ENCODE measurements at regions of chr4 and their contacts with region 1.

Region 1: GRCh38 chr4:182806259-182807252 is 110.6 kb downstream of the DCTD start:
- DNase-seq: peak; percentile 84
- ATAC-seq: peak; percentile 42
- H3K4me3 Mint-ChIP-seq: peak overlapping the region; percentile 59
- H3K27ac Mint-ChIP-seq: no peak overlapping the region
- H3K4me1 Mint-ChIP-seq: peaks cover 8% of the 10 kb centered on the region
- H3K27me3 Mint-ChIP-seq: peaks cover 4% of the 10 kb centered on the region

Region 2: DNA sequence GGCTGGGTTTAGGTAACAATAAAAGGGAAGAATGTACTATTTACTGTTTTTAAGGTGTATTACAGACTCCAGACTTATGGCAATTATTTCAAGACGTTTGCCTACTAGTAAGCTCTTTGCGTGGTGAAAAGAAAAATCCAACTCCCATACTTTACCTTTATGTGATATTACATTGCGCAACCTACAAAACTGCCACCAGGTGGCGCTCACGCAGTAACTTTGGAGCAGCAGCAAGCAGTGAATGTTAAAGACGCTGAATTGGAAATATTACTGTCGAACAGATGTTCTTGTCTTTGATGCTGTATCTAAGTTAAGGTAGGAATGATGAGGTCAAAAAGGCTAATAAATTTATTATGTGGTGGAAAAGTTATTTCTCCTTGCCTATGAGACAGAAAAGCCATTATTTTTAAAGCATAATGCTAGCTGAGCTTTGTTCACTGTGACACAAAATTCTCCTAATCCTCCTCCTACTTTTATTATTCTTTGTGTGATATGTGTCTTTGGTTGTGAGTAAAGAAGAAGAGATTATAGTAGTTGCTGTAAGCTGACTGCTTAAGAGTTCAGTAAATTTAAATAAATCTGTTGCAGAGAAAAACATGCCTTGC is 1663.2 kb before region 1 on chr4:
- CTCF ChIA-PET with region 1: no interaction called
- POLR2A ChIA-PET with region 1: no interaction called
- intact Hi-C with region 1: loop called (anchors 1 to 10 kb)
- DNase-seq: peak; percentile 84
- ATAC-seq: peak; percentile 60
- H3K4me3 Mint-ChIP-seq: no peak overlapping the region
- H3K27ac Mint-ChIP-seq: no peak overlapping the region
- H3K4me1 Mint-ChIP-seq: no peaks in the 10 kb centered on the region
- H3K27me3 Mint-ChIP-seq: peaks cover 5% of the 10 kb centered on the region

Region 3: GRCh38 chr4:181569553-181569952 is 1237.0 kb before region 1 on chr4:
- CTCF ChIA-PET with region 1: no interaction called
- POLR2A ChIA-PET with region 1: no interaction called
- intact Hi-C with region 1: loop called in 1 of 2 experiments (anchors 5 kb)
- DNase-seq: no peak
- ATAC-seq: no peak
- H3K4me3 Mint-ChIP-seq: no peak overlapping the region
- H3K27ac Mint-ChIP-seq: no peak overlapping the region
- H3K4me1 Mint-ChIP-seq: no peaks in the 10 kb centered on the region
- H3K27me3 Mint-ChIP-seq: no peaks in the 10 kb centered on the region

Region 4: GRCh38 chr4:182555997-182556418 is 250.5 kb before region 1 on chr4:
- CTCF ChIA-PET with region 1: no interaction called
- POLR2A ChIA-PET with region 1: no interaction called
- intact Hi-C with region 1: no loop called
- DNase-seq: no peak
- ATAC-seq: no peak
- H3K4me3 Mint-ChIP-seq: no peak overlapping the region
- H3K27ac Mint-ChIP-seq: no peak overlapping the region
- H3K4me1 Mint-ChIP-seq: no peaks in the 10 kb centered on the region
- H3K27me3 Mint-ChIP-seq: peaks cover 16% of the 10 kb centered on the region

Region 5: GRCh38 chr4:182585321-182585720 is 221.2 kb before region 1 on chr4:
- CTCF ChIA-PET with region 1: no interaction called
- POLR2A ChIA-PET with region 1: interaction called, 13 read pairs
- intact Hi-C with region 1: no loop called
- DNase-seq: no peak
- ATAC-seq: no peak
- H3K4me3 Mint-ChIP-seq: no peak overlapping the region
- H3K27ac Mint-ChIP-seq: no peak overlapping the region
- H3K4me1 Mint-ChIP-seq: no peaks in the 10 kb centered on the region
- H3K27me3 Mint-ChIP-seq: no peaks in the 10 kb centered on the region

Region 6: GRCh38 chr4:182786991-182787390 is 19.6 kb before region 1 on chr4:
- CTCF ChIA-PET with region 1: no interaction called
- POLR2A ChIA-PET with region 1: no interaction called
- intact Hi-C with region 1: no loop called
- DNase-seq: no peak
- ATAC-seq: no peak
- H3K4me3 Mint-ChIP-seq: no peak overlapping the region
- H3K27ac Mint-ChIP-seq: no peak overlapping the region
- H3K4me1 Mint-ChIP-seq: no peaks in the 10 kb centered on the region
- H3K27me3 Mint-ChIP-seq: peaks cover 5% of the 10 kb centered on the region

Region 7: DNA sequence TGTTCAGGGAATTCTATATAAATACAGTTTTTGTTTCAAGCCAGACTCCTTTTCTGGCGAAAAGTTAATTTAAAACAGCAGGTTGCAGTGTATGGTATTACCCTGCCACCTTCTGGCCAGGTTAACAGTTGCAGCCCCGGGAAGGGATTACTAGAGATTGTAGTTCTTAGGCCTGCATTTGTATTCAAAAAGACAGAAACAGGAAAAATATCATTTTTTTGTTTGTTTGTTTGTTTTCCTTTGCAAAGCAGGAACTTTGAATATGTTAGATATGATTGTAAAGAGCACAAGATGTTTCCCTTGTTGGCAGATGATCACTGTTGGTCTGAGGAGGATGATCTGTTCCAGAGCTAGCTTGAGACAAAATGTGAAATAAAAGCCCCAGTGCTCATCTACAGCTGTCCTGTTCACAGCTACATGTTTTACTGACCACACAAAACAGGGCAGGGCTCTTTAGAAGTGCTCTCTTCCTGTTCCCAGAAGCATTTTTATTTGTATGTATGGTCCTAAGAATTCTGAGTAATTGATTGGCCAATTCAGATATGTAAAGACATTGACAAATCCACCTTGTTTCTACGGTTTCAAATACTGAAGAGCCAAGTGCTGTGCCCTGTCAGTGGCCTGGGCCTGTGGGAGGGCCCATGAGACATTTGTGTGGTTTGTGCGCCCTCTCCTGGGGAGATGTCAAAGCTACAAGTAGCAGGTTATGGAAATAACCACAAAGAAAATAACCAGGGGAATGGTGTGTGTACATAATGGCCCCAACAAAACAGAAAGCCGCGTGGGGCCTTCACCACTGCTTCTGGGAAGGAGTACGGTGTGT is 455.6 kb after region 1 on chr4:
- CTCF ChIA-PET with region 1: no interaction called
- POLR2A ChIA-PET with region 1: no interaction called
- intact Hi-C with region 1: loop called in 1 of 2 experiments (anchors 1 kb)
- DNase-seq: peak; percentile 90
- ATAC-seq: peak; percentile 97
- H3K4me3 Mint-ChIP-seq: no peak overlapping the region
- H3K27ac Mint-ChIP-seq: no peak overlapping the region
- H3K4me1 Mint-ChIP-seq: peaks cover 5% of the 10 kb centered on the region
- H3K27me3 Mint-ChIP-seq: no peaks in the 10 kb centered on the region

Measured in activated CD4-positive, alpha-beta T cell treated with anti-CD3 and anti-CD28 coated beads for 36 hours (primary cell).